Mammary epithelial cell (primary cell): ENCODE measurements at regions of chr12 and their contacts with region 1.

Region 1: GRCh38 chr12:132437252-132437932 is 52.6 kb upstream of the FBRSL1 start:
- DNase-seq: no peak
- H3K4me3 ChIP-seq: no peak overlapping the region
- H3K27ac ChIP-seq: no peak overlapping the region
- H3K4me1 ChIP-seq: peaks cover 8% of the 10 kb centered on the region
- H3K27me3 ChIP-seq: peaks cover 6% of the 10 kb centered on the region
- CTCF ChIP-seq: no peak

Region 2: GRCh38 chr12:132400011-132400641 is 37.3 kb before region 1 on chr12:
- CTCF ChIA-PET with region 1: no interaction called
- dilution Hi-C with region 1: no loop called
- in situ Hi-C with region 1: no loop called
- intact Hi-C with region 1: no loop called
- DNase-seq: no peak
- H3K4me3 ChIP-seq: no peak overlapping the region
- H3K27ac ChIP-seq: no peak overlapping the region
- H3K4me1 ChIP-seq: no peaks in the 10 kb centered on the region
- H3K27me3 ChIP-seq: peaks cover 32% of the 10 kb centered on the region
- CTCF ChIP-seq: no peak

Region 3: DNA sequence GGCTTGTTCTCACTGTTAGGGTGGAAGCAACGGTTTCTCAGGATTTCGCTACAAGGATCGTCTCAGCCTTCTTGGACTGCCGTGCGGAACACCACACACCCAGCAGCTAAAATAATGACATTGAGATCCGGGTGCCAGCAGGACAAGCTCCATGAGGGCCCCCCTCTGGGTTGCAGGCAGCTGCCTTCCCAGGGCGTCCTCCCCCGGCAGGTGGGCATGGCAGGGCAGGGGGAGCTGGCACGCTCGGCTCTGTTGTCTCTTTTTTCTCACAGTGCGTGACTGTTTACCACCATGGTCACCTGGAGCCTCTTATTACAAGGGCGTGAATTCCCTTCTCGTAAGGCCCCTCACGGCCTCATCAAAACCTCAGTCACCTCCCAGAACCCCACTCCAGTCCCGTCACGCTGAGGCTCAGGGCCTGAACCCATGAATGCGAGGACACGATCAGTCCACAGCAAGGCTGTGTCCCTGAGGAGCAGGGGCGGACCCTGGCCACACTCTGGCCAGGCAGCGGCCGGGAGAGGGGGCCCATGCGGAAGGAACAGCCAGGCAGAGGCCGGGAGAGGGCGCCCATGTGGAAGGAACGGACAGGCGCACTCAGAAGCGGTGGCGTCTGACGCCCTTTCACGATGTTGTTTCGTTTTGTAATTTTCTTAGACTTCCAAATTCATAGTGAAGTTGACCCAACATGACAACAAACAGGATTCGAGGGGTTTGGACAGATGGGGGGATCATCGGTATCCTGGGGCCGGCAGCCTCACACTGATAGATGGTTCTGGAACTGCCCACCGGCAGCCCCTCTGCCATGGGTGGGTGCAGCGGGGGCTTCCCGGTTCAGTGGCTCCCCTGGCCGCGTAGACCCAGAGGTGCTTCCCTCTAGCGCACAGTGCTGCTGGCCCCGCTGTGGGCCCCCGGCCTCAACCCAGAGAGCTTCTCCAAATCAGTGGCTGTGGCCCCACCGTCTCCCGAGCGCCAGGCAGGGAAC is 162.9 kb after region 1 on chr12:
- CTCF ChIA-PET with region 1: no interaction called
- dilution Hi-C with region 1: loop called (anchors 5 kb)
- in situ Hi-C with region 1: no loop called
- intact Hi-C with region 1: no loop called
- DNase-seq: peak; percentile 53
- H3K4me3 ChIP-seq: peak overlapping the region; percentile 49 to 52 (median 50)
- H3K27ac ChIP-seq: no peak overlapping the region
- H3K4me1 ChIP-seq: peaks cover 9% of the 10 kb centered on the region
- H3K27me3 ChIP-seq: peaks cover 20% of the 10 kb centered on the region
- CTCF ChIP-seq: peak; percentile 47 to 80